Activated CD4-positive, alpha-beta memory T cell treated with anti-CD3 and anti-CD28 coated beads, Interleukin-2, amount 10 ng/mL, durations not matched to agents 7 days and 5 days (primary cell): ENCODE measurements at regions of chr22 and their contacts with region 1.

Region 1: GRCh38 chr22:39927544-39927943 is 26.7 kb downstream of the GRAP2 start:
- DNase-seq: no peak
- H3K4me3 Mint-ChIP-seq: no peak overlapping the region
- H3K27ac Mint-ChIP-seq: no peak overlapping the region
- H3K4me1 Mint-ChIP-seq: peaks cover 40% of the 10 kb centered on the region
- H3K27me3 Mint-ChIP-seq: no peaks in the 10 kb centered on the region

Region 2: GRCh38 chr22:39900306-39901227 is 27.0 kb before region 1 on chr22 and contains the start of gene GRAP2:
- CTCF ChIA-PET with region 1: interaction called, 7 read pairs
- POLR2A ChIA-PET with region 1: interaction called, 447 read pairs
- DNase-seq: peak; percentile 86
- H3K4me3 Mint-ChIP-seq: peak within 1 kb of the TSS; percentile 87
- H3K27ac Mint-ChIP-seq: peak within 1 kb of the TSS; percentile 85
- H3K4me1 Mint-ChIP-seq: peaks cover 17% of the 10 kb centered on the region
- H3K27me3 Mint-ChIP-seq: no peaks in the 10 kb centered on the region
- total RNA-seq, gene GRAP2: 108 to 111 TPM

Region 3: GRCh38 chr22:39908737-39909136 is 18.8 kb before region 1 on chr22:
- CTCF ChIA-PET with region 1: interaction called, 15 read pairs
- POLR2A ChIA-PET with region 1: interaction called, 447 read pairs
- DNase-seq: peak; percentile 57
- H3K4me3 Mint-ChIP-seq: peak overlapping the region; percentile 87
- H3K27ac Mint-ChIP-seq: peak overlapping the region; percentile 85
- H3K4me1 Mint-ChIP-seq: peaks cover 68% of the 10 kb centered on the region
- H3K27me3 Mint-ChIP-seq: no peaks in the 10 kb centered on the region

Region 4: DNA sequence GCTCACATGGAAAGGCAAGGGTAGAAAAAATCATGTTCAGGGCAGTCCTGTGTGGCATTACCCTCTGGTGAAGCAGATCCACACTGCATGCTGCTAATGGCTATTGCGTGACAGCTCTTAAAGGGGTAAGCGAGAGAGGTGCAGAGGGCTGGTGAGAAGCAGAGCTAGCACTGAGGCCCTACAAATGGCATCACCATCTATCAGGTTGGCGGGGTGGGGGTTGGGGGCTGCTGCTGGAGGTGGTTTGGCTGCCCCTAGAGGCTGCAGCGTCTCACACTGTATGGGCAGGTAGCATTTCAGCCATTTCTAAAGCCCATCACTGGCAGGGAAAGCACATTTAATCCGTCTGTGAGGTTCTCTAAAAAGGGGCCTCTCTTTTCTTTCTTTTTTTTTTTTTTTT is 15.8 kb after region 1 on chr22:
- CTCF ChIA-PET with region 1: interaction called, 17 read pairs
- POLR2A ChIA-PET with region 1: interaction called, 12 read pairs
- DNase-seq: no peak
- H3K4me3 Mint-ChIP-seq: no peak overlapping the region
- H3K27ac Mint-ChIP-seq: peak overlapping the region; percentile 65
- H3K4me1 Mint-ChIP-seq: peaks cover 79% of the 10 kb centered on the region
- H3K27me3 Mint-ChIP-seq: no peaks in the 10 kb centered on the region